Naive thymus-derived CD8-positive, alpha-beta T cell (primary cell): ENCODE measurements at regions of chr6 and their contacts with region 1.

Region 1: GRCh38 chr6:28895134-28895812 is 28.5 kb downstream of the TRIM27 start:
- DNase-seq: peak; percentile 66 to 98 (median 94)
- ATAC-seq: peak; percentile 69 to 73
- H3K4me3 Mint-ChIP-seq: peak overlapping the region; percentile 95 to 99 (median 98)
- H3K27ac Mint-ChIP-seq: peak overlapping the region; percentile 99 to 100 (median 100)
- H3K4me1 Mint-ChIP-seq: peaks cover 8 to 23% (median 13%) of the 10 kb centered on the region in 4 donors
- H3K27me3 Mint-ChIP-seq: peaks cover 0 to 6% (median 0%) of the 10 kb centered on the region in 5 donors

Region 2: DNA sequence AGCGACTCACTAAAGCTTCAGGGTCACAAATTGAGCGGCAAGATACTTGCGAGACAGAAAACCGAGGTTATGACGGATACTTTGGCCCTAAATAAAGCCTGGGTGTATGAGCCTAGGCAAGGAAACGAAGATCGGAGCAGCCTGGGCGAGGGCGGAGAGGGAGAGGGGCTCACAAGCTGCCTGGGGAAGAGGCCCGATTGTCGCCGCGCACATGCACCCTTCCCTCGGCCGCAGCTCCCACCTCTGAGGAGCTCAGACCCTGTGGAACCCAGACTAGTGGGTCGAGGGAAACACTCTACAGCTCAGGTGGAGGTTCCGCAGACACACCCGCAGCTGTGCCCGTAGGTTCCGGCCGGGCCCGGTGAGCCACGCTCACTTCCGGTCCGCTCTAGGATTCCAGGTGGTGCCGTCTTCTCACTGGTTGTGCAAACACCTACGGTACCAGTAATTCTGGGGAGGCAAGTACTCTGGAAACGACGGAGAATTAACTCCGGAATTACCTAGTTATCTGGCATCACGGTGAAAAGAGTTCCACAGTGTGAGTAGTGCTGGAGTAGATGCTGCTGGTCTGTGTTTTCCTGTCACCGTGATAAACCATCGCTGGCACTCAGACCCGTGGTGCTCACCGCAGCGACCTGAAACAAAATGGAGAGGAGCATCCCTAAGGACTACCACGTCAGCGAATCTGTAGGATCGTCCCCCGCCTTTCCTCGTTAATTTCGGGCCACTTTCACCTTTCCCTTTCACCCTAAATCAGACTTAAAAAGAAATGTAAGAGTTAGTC is 308.1 kb before region 1 on chr6:
- POLR2A ChIA-PET with region 1: no interaction called
- DNase-seq: peak; percentile 37 to 79 (median 58)
- ATAC-seq: peak; percentile 90 to 91
- H3K4me3 Mint-ChIP-seq: peak overlapping the region; percentile 81 to 92 (median 86)
- H3K27ac Mint-ChIP-seq: peak overlapping the region in 7 of 10 donors; percentile 57 to 83 (median 75)
- H3K4me1 Mint-ChIP-seq: peaks cover 16 to 31% (median 19%) of the 10 kb centered on the region in 4 donors
- H3K27me3 Mint-ChIP-seq: peaks cover 45 to 77% (median 74%) of the 10 kb centered on the region in 5 donors

Region 3: GRCh38 chr6:28863604-28864320 is 31.5 kb before region 1 on chr6:
- POLR2A ChIA-PET with region 1: interaction called, 172 read pairs
- DNase-seq: peak; percentile 52 to 96 (median 88)
- ATAC-seq: peak; percentile 36 to 45
- H3K4me3 Mint-ChIP-seq: peak overlapping the region; percentile 89 to 98 (median 96)
- H3K27ac Mint-ChIP-seq: peak overlapping the region; percentile 85 to 100 (median 95)
- H3K4me1 Mint-ChIP-seq: peaks cover 23 to 50% (median 40%) of the 10 kb centered on the region in 4 donors
- H3K27me3 Mint-ChIP-seq: peaks cover 0 to 8% (median 0%) of the 10 kb centered on the region in 5 donors

Region 4: DNA sequence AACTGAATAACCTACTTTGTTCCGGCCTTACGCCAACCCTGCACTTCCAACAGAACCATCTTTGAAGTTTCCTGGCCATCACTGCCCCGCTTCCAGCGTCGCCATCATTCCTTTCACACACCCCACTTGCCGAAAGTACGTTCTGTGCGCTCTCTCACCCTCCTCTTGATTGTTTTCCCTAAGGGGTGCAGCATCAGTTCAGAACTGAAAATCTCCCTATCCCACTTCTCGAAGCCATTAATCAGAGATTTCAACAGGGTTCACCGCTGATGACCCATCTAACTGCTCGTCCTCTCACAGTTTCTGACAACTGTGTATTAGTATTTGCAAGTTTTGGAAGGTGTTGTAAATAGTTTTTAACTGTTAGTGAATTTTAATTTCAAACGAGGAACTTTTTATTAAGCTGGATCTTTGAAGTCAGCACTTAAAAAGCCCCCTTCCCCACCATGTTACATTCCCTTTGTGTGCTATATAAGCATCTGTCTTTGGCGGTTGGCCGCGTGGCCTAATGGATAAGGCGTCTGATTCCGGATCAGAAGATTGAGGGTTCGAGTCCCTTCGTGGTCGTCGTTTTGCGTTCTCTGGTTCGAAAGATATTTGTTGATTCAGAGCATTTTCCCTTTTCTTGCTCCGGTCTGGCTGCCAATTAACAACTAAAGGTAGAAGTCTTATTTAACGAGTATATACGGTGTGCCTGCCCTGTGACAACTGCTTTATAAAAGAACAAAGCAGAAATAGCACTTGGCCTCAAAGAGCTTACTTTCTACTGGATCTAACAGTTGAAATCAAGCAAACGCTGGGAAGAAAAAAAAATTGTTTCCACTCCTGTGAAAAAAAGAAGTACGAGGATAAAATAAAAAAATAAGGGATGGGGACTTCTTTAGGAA is 14.1 kb before region 1 on chr6:
- POLR2A ChIA-PET with region 1: interaction called, 110 read pairs
- DNase-seq: peak in 9 of 10 donors; percentile 39 to 77 (median 67)
- ATAC-seq: no peak
- H3K4me3 Mint-ChIP-seq: peak overlapping the region; percentile 80 to 93 (median 87)
- H3K27ac Mint-ChIP-seq: peak overlapping the region; percentile 67 to 98 (median 88)
- H3K4me1 Mint-ChIP-seq: peaks cover 16 to 54% (median 42%) of the 10 kb centered on the region in 4 donors
- H3K27me3 Mint-ChIP-seq: peaks cover 0 to 10% (median 0%) of the 10 kb centered on the region in 5 donors

Region 5: DNA sequence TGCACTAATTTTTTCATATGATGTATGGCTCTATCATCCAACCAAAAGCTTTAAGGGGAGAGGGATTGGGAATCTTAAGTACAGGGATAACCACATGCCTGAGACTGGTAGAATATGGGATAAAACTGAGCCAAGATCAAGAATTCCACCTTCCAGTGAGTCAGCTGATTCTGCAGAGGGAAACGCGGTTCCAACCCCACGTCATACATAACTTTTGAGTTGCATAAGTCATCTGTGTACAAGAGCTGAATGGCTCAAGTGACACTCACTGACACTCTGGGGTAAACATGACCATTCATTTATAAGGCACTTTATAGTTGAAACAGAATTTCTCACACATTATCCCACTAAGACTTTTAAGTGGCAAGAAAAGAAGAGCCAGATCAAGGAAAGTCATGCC is 12.1 kb after region 1 on chr6:
- POLR2A ChIA-PET with region 1: no interaction called
- DNase-seq: no peak
- ATAC-seq: no peak
- H3K4me3 Mint-ChIP-seq: no peak overlapping the region
- H3K27ac Mint-ChIP-seq: peak overlapping the region in 5 of 10 donors; percentile 5 to 40 (median 20)
- H3K4me1 Mint-ChIP-seq: peaks cover 1 to 11% (median 5%) of the 10 kb centered on the region in 4 donors
- H3K27me3 Mint-ChIP-seq: no peaks in the 10 kb centered on the region

Region 6: DNA sequence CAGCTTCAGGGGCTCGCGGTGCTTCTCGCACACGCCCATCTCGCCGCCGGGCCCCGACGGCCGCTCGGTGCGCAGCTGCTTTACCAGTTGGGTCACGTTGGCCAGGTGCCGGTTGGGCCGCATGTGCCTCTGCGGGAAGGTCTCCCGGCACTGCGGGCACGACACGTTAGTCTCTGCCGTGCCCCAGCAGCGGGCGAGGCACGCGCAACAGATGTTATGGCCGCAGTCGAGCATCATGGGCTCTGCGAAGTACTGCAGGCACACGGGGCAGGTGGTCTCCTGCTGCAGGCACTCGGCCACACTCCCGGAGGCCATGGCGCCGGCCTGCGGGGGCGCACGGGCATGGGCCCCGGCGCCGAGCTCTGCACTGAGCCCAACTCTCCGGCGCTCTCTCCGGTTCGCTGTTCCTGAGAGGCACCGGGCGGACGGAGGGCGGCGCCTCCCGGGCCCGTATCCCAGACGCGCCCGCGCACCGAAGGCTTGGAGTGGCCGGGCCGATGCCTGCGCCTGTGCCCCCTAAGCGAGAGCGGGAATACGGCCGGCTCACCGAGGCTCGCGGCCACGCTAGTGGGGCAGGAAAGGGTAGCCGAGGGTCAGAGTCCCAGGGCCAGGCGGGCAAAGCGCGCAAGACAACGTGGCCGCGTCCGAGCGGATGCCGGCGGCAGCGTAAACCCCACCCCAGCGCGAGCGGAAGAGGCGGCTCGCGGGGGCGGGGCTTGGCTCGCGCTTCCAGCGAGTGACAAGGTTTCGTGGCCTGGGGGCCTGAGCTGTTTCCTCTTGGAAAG is 28.2 kb after region 1 on chr6 and contains the start of gene TRIM27:
- POLR2A ChIA-PET with region 1: interaction called, 81 read pairs
- DNase-seq: peak; percentile 57 to 83 (median 78)
- ATAC-seq: peak; percentile 78 to 80
- H3K4me3 Mint-ChIP-seq: peak within 1 kb of the TSS; percentile 86 to 98 (median 94)
- H3K27ac Mint-ChIP-seq: peak within 1 kb of the TSS; percentile 89 to 96 (median 94)
- H3K4me1 Mint-ChIP-seq: peaks cover 7 to 47% (median 40%) of the 10 kb centered on the region in 4 donors
- H3K27me3 Mint-ChIP-seq: no peaks in the 10 kb centered on the region
- polyA plus RNA-seq, gene TRIM27: 37.5 to 71.3 (median 44.2) TPM

Region 7: GRCh38 chr6:28940858-28941680 is 45.8 kb after region 1 on chr6:
- POLR2A ChIA-PET with region 1: interaction called, 65 read pairs
- DNase-seq: peak; percentile 41 to 89 (median 84)
- ATAC-seq: peak; percentile 65 to 70
- H3K4me3 Mint-ChIP-seq: peak overlapping the region; percentile 84 to 98 (median 94)
- H3K27ac Mint-ChIP-seq: peak overlapping the region; percentile 92 to 99 (median 94)
- H3K4me1 Mint-ChIP-seq: peaks cover 27 to 61% (median 56%) of the 10 kb centered on the region in 4 donors
- H3K27me3 Mint-ChIP-seq: peaks cover 0 to 11% (median 0%) of the 10 kb centered on the region in 5 donors

Region 8: DNA sequence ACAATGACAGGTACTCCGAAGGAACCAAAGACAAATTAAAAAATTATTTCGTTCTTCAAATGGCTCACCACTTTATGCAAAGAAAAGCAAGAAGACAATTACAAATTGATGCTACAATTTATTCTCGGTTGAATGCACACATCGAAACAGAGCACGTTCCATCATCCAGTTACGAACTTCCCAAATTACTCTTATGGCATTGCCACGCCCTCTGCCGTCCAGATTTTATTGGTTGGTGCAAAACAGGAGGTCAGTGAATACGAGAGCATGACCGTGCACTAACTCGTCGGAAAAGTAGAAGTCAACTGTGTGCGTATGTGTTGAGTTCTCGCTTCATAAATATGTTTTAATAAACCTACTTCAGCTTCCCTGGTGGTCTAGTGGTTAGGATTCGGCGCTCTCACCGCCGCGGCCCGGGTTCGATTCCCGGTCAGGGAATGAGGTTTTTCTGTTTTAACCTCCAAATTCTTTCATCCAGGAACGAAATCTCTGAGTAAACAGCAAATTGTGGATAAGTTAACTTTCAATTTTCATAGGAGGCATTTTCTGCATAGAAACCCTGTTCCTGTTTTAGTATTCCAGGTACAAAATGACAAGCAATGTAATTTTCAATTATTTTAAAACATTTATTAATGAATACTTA is 86.7 kb after region 1 on chr6:
- POLR2A ChIA-PET with region 1: interaction called, 25 read pairs
- DNase-seq: peak; percentile 49 to 95 (median 76)
- ATAC-seq: peak; percentile 61 to 74
- H3K4me3 Mint-ChIP-seq: peak overlapping the region; percentile 79 to 97 (median 92)
- H3K27ac Mint-ChIP-seq: peak overlapping the region; percentile 86 to 100 (median 93)
- H3K4me1 Mint-ChIP-seq: peaks cover 31 to 76% (median 62%) of the 10 kb centered on the region in 4 donors
- H3K27me3 Mint-ChIP-seq: peaks cover 9 to 43% (median 31%) of the 10 kb centered on the region in 5 donors

Region 9: DNA sequence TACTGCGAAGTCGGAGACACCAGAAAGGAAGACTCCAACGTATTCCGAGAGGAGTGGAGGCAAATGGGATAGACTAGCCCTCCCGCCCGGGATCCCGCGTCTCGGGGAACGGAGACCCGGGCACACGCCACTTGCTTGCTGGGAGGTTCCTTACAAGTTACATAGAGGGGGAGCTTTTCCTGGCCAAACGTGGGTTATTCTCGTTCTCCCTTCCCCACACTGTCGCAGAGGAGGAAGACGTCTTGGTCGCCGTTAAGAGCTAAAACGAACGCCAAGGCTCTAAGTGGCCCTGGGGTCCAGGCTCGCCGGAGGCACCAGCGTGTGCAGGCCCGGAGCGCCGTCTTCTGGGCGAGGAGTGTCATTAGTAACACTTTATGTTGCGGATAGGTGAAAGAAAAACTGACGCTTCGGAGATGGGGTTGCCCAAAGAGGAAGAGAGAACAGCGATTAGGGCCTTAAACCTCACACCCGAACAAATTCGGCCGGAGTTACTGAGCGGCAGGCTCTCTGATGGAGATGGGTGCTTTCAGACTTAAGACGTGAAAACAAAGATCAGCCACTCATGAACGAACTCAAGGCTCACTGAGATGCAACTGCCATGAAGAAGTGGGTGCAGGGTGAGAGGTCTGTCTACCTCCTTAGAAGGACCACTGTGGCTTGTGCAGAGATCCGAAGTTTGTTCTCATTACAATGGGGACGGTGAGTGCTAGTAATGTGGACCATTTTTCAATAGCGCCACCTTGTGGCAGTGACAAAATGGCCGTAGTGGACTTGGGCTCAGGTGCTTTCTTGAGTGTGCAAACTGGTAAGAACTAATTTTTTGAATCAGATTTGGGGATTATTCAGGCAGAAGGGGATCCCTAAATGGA is 121.5 kb after region 1 on chr6:
- POLR2A ChIA-PET with region 1: interaction called, 12 read pairs
- DNase-seq: peak; percentile 63 to 89 (median 79)
- ATAC-seq: peak; percentile 73 to 75
- H3K4me3 Mint-ChIP-seq: peak overlapping the region; percentile 82 to 95 (median 91)
- H3K27ac Mint-ChIP-seq: peak overlapping the region; percentile 65 to 96 (median 82)
- H3K4me1 Mint-ChIP-seq: peaks cover 12 to 20% (median 19%) of the 10 kb centered on the region in 4 donors
- H3K27me3 Mint-ChIP-seq: peaks cover 0 to 42% (median 5%) of the 10 kb centered on the region in 5 donors